Activated B cell treated with CpG ODN at 0.5 μM for 24 hours (primary cell): ENCODE measurements at regions of chr5 and their contacts with region 1.

Region 1: GRCh38 chr5:68239487-68239886 is 23.9 kb downstream of the PIK3R1 start:
- DNase-seq: peak; percentile 39
- ATAC-seq: peak; percentile 84
- H3K4me3 Mint-ChIP-seq: peak overlapping the region; percentile 71
- H3K27ac Mint-ChIP-seq: peak overlapping the region; percentile 82
- H3K4me1 Mint-ChIP-seq: peaks cover 76% of the 10 kb centered on the region
- H3K27me3 Mint-ChIP-seq: no peaks in the 10 kb centered on the region
- CTCF ChIP-seq: no peak

Region 2: DNA sequence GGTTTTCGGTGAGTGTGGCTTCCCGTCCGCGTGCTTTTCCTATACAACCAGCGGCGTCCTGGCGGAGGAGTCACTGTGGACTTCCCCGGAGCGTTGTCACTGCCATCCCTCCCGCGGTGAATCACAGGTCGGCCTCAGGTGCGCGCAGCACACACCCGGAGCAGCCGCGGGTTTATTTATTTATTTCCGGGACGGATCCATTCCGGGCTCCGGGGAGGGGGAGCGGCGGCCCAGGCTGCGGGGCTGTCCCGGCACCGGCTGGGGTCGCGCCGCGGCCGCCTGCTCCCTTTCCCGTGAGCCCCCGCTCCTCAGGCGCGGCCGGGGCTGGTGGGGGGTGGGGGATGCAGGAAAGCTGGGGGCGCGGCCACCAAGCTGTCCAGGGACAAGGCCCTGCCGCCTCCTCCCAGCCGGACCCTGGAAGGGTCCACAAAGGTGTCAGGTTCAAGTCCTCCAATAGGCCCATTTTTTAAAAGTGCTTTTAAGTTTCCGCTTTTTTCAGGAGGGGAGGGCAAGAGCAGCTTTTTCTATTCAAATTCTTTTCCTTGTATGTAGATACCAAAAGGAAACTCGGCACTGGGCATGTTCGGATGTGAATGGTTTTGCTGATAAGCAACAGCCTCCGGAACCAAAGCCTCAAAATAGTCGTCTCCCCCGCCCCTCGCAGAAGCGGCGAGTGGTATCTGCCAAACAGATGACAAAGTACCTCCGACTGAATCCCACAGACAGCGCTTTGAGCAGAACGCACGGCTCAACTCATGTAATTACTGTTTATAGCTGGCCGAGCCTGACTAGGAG is 1235.4 kb before region 1 on chr5:
- CTCF ChIA-PET with region 1: no interaction called
- POLR2A ChIA-PET with region 1: no interaction called
- intact Hi-C with region 1: loop called (anchors 5 kb)
- DNase-seq: peak; percentile 66
- ATAC-seq: peak; percentile 79
- H3K4me3 Mint-ChIP-seq: peak overlapping the region; percentile 87
- H3K27ac Mint-ChIP-seq: peak overlapping the region; percentile 72
- H3K4me1 Mint-ChIP-seq: peaks cover 30% of the 10 kb centered on the region
- H3K27me3 Mint-ChIP-seq: no peaks in the 10 kb centered on the region
- CTCF ChIP-seq: no peak

Region 3: GRCh38 chr5:67971223-67971830 is 268.2 kb before region 1 on chr5:
- CTCF ChIA-PET with region 1: no interaction called
- POLR2A ChIA-PET with region 1: no interaction called
- intact Hi-C with region 1: loop called (anchors 10 kb)
- DNase-seq: no peak
- ATAC-seq: no peak
- H3K4me3 Mint-ChIP-seq: no peak overlapping the region
- H3K27ac Mint-ChIP-seq: no peak overlapping the region
- H3K4me1 Mint-ChIP-seq: peaks cover 2% of the 10 kb centered on the region
- H3K27me3 Mint-ChIP-seq: no peaks in the 10 kb centered on the region
- CTCF ChIP-seq: no peak

Region 4: DNA sequence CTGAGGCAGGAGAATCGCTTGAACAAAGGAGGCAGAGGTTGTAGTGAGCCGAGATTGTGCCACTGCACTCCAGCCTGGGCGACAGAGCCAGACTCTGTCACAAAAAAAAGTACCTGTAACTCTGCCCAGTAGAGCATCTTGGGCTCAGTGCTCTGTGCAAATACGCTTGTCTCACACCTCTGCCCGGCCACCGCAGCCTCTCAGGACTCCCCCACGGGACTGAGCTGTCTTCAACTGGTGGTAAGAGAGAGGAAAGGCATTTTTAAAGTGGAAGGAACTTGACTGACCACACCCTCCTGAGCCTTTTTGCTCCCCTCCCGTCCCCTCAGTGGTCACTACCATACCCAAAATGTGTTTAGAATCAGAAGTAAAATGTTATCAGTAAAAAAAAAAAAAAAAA is 198.2 kb before region 1 on chr5:
- CTCF ChIA-PET with region 1: no interaction called
- POLR2A ChIA-PET with region 1: interaction called, 5 read pairs
- intact Hi-C with region 1: loop called (anchors 5 kb)
- DNase-seq: no peak
- ATAC-seq: peak; percentile 87
- H3K4me3 Mint-ChIP-seq: peak overlapping the region; percentile 67
- H3K27ac Mint-ChIP-seq: peak overlapping the region; percentile 80
- H3K4me1 Mint-ChIP-seq: peaks cover 31% of the 10 kb centered on the region
- H3K27me3 Mint-ChIP-seq: no peaks in the 10 kb centered on the region
- CTCF ChIP-seq: no peak

Region 5: GRCh38 chr5:68141494-68141893 is 98.0 kb before region 1 on chr5:
- CTCF ChIA-PET with region 1: no interaction called
- POLR2A ChIA-PET with region 1: interaction called, 3 read pairs
- intact Hi-C with region 1: loop called (anchors 1 kb)
- DNase-seq: no peak
- ATAC-seq: peak; percentile 82
- H3K4me3 Mint-ChIP-seq: peak overlapping the region; percentile 12
- H3K27ac Mint-ChIP-seq: no peak overlapping the region
- H3K4me1 Mint-ChIP-seq: peaks cover 17% of the 10 kb centered on the region
- H3K27me3 Mint-ChIP-seq: no peaks in the 10 kb centered on the region
- CTCF ChIP-seq: no peak

Region 6: GRCh38 chr5:68196876-68197275 is 42.6 kb before region 1 on chr5:
- CTCF ChIA-PET with region 1: no interaction called
- POLR2A ChIA-PET with region 1: interaction called, 5 read pairs
- intact Hi-C with region 1: loop called (anchors 10 kb)
- DNase-seq: peak; percentile 21
- ATAC-seq: peak; percentile 99
- H3K4me3 Mint-ChIP-seq: peak overlapping the region; percentile 0
- H3K27ac Mint-ChIP-seq: peak overlapping the region; percentile 3
- H3K4me1 Mint-ChIP-seq: peaks cover 39% of the 10 kb centered on the region
- H3K27me3 Mint-ChIP-seq: no peaks in the 10 kb centered on the region
- CTCF ChIP-seq: no peak

Region 7: DNA sequence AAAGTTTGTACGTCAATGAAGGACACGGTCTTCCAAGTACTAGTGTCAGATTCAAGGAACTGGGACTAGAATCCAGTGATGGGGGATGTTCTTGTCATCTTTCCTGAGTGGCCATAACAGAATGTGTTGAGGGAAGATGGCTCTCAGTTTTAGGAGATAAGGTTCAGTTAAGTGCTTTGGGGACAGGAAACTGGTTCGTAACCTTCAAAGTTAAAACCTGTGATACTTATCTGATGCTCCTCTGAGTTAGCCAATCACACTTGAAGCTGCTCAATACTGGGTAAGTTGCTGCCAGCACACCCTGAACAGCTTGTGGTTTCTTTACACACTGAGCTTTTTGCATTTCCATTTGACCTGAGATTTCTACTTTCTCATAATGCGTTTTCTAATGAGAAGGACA is 40.5 kb after region 1 on chr5:
- CTCF ChIA-PET with region 1: no interaction called
- POLR2A ChIA-PET with region 1: no interaction called
- intact Hi-C with region 1: no loop called
- DNase-seq: no peak
- ATAC-seq: no peak
- H3K4me3 Mint-ChIP-seq: no peak overlapping the region
- H3K27ac Mint-ChIP-seq: no peak overlapping the region
- H3K4me1 Mint-ChIP-seq: peaks cover 9% of the 10 kb centered on the region
- H3K27me3 Mint-ChIP-seq: no peaks in the 10 kb centered on the region
- CTCF ChIP-seq: no peak